ENCODE measurements at regions of chr7 and their contacts with region 1.

Region 1: GRCh38 chr7:96321658-96322372 is at the start of gene SLC25A13:
- DNase-seq: peak; percentile 98
- total RNA-seq, gene SLC25A13: 10.5 TPM

Region 2: DNA sequence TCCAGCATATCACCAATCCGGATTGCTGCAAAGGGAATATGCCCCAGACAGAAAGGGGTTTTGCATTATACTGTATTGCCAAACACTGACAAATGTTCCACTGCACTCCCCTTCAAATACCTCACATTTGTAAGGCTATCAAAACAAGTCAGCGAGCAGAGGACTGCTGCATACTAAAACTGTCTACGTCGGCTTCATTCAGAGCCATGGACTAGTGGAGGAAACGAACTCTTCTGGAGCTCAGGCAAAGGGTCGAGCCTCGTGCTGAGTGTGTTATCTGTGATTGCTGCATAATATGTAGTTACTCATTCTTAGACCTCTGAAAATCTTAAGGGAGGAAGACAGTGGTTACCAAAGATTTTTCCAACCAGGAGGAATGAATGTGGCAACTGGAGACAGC is 349.3 kb before region 1 on chr7:
- intact Hi-C with region 1: no loop called
- DNase-seq: no peak

Region 3: GRCh38 chr7:96236198-96237039 is 85.4 kb before region 1 on chr7:
- intact Hi-C with region 1: loop called (anchors 5 kb)
- DNase-seq: no peak

Region 4: GRCh38 chr7:96388620-96389383 is 67.0 kb after region 1 on chr7:
- intact Hi-C with region 1: loop called (anchors 5 kb)
- DNase-seq: no peak

Region 5: DNA sequence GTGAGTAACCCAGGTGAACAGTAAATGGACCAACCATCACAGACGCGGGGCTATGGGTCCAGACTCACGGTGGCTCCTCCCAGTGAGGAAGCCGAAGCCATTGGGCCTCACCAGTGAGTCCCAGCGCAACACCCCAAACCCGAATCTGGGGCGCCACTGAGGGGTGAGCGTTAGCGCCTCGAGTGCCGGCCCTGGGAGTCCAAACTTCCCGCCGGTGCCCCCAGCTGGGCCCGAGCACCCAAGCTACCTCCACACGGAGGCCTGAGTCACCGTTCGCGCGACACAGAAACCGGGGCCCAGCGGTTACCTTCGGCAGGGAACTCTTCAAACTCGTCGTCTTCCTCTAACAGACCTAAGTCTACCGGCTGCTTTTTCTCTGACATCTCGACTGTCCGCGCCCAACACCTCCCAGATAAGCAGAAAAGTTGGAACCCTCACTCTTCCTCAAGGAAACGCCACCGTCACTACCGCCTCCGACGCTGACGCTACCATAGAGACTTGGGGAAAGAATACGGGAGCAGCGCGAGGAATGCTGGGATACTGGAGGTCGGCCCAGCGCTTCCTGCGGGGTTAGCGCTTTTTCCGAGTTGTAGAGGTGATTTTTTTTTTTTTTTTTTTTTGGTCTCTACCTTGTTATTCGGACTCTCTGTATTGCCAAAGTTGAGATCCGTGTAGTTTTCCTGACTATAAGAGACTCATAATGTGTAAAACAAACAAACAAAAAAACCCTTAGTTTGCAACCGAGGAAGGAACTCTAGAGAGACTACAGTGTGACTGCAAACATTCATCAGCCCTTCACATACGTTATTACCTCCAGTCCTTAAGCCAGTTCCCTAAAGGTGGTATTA is 387.8 kb after region 1 on chr7 and contains the start of gene SEM1:
- intact Hi-C with region 1: loop called (anchors 5 kb)
- DNase-seq: peak; percentile 92
- total RNA-seq, gene SEM1: 55.3 TPM

Measured in cardiac septum (tissue), 1 donor.